A673 (cell line): ENCODE measurements at regions of chr1 and their contacts with region 1.

Region 1: GRCh38 chr1:203794764-203795440 is 521 bp upstream of the ZBED6 start:
- DNase-seq: no peak
- H3K4me3 ChIP-seq: peak overlapping the region; percentile 69
- H3K27ac ChIP-seq: peak overlapping the region; percentile 94
- H3K4me1 ChIP-seq: peaks cover 28% of the 10 kb centered on the region
- H3K27me3 ChIP-seq: no peaks in the 10 kb centered on the region
- CTCF ChIP-seq: no peak

Region 2: GRCh38 chr1:203338335-203339036 is 456.4 kb before region 1 on chr1:
- CTCF ChIA-PET with region 1: no interaction called
- POLR2A ChIA-PET with region 1: no interaction called
- intact Hi-C with region 1: no loop called
- DNase-seq: peak; percentile 74
- H3K4me3 ChIP-seq: no peak overlapping the region
- H3K27ac ChIP-seq: no peak overlapping the region
- H3K4me1 ChIP-seq: no peaks in the 10 kb centered on the region
- H3K27me3 ChIP-seq: peaks cover 8% of the 10 kb centered on the region
- CTCF ChIP-seq: peak; percentile 87

Region 3: DNA sequence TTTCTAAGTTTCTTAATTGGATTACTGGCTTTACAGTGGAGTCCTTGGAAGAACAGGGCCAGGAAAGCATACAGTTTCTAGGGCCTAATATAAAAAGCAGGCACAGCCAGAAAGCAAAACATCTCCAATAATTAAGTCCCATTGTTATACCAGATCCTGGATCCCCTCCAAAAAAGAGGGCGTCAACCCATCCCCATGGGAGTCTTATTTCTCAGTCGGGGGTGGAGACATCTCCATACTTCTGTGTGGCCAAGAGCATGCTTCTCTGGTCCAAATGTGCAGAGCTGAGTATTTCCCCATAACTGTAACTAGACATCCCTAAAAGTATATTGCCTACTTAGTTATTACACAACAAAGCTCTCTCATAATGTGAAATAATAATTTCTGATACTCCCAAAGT is 173.8 kb after region 1 on chr1:
- CTCF ChIA-PET with region 1: no interaction called
- POLR2A ChIA-PET with region 1: interaction called, 13 read pairs
- intact Hi-C with region 1: no loop called
- DNase-seq: peak; percentile 41
- H3K4me3 ChIP-seq: no peak overlapping the region
- H3K27ac ChIP-seq: no peak overlapping the region
- H3K4me1 ChIP-seq: no peaks in the 10 kb centered on the region
- H3K27me3 ChIP-seq: no peaks in the 10 kb centered on the region
- CTCF ChIP-seq: no peak